ENCODE measurements at regions of chr3 and their contacts with region 1.

Region 1: GRCh38 chr3:71305231-71306206 is 278.0 kb downstream of the FOXP1 start:
- DNase-seq: peak; percentile 57
- ATAC-seq: peak; percentile 71
- H3K4me3 ChIP-seq: peak overlapping the region; percentile 28
- H3K27ac ChIP-seq: peak overlapping the region; percentile 77
- H3K4me1 ChIP-seq: peaks cover 14% of the 10 kb centered on the region
- H3K27me3 ChIP-seq: no peaks in the 10 kb centered on the region
- CTCF ChIP-seq: no peak
- POLR2A ChIP-seq: no peak
- RAD21 ChIP-seq: no peak

Region 2: GRCh38 chr3:70064194-70064779 is 1241.2 kb before region 1 on chr3:
- CTCF ChIA-PET with region 1: no interaction called
- POLR2A ChIA-PET with region 1: no interaction called
- dilution Hi-C with region 1: no loop called
- in situ Hi-C with region 1: no loop called
- intact Hi-C with region 1: loop called (anchors 10 kb)
- DNase-seq: peak; percentile 38
- ATAC-seq: peak; percentile 77
- H3K4me3 ChIP-seq: no peak overlapping the region
- H3K27ac ChIP-seq: no peak overlapping the region
- H3K4me1 ChIP-seq: no peaks in the 10 kb centered on the region
- H3K27me3 ChIP-seq: peaks cover 29% of the 10 kb centered on the region
- CTCF ChIP-seq: peak; percentile 64
- POLR2A ChIP-seq: no peak
- RAD21 ChIP-seq: peak; percentile 70

Region 3: GRCh38 chr3:70539908-70540307 is 765.6 kb before region 1 on chr3:
- CTCF ChIA-PET with region 1: no interaction called
- POLR2A ChIA-PET with region 1: no interaction called
- dilution Hi-C with region 1: no loop called
- in situ Hi-C with region 1: loop called (anchors 10 kb)
- intact Hi-C with region 1: no loop called
- DNase-seq: no peak
- ATAC-seq: no peak
- H3K4me3 ChIP-seq: no peak overlapping the region
- H3K27ac ChIP-seq: no peak overlapping the region
- H3K4me1 ChIP-seq: no peaks in the 10 kb centered on the region
- H3K27me3 ChIP-seq: peaks cover 34% of the 10 kb centered on the region
- CTCF ChIP-seq: no peak
- POLR2A ChIP-seq: no peak
- RAD21 ChIP-seq: no peak

Region 4: DNA sequence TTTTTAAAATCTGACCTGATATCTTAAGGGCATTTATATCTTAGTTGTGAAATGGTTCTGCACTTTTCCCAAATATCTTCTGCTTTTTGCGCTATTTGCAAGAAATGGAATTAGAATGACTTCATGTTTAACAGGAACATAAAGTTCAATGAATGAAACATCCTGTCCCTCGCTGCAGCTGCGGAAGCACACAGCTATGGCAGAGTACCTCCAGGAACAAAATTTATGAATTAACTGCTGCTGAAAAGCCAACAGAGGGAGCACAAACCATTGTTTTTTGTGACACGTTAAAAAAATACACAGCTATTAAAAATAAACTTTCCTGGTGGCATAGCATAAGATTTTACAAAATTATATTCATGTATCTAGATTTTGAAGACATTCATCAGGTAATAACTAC is 588.7 kb before region 1 on chr3:
- CTCF ChIA-PET with region 1: no interaction called
- POLR2A ChIA-PET with region 1: no interaction called
- dilution Hi-C with region 1: no loop called
- in situ Hi-C with region 1: loop called (anchors 25 kb)
- intact Hi-C with region 1: loop called (anchors 2 kb)
- DNase-seq: peak; percentile 48
- ATAC-seq: peak; percentile 69
- H3K4me3 ChIP-seq: no peak overlapping the region
- H3K27ac ChIP-seq: no peak overlapping the region
- H3K4me1 ChIP-seq: no peaks in the 10 kb centered on the region
- H3K27me3 ChIP-seq: no peaks in the 10 kb centered on the region; the same call in 1 of the 2 replicates
- CTCF ChIP-seq: peak; percentile 52
- POLR2A ChIP-seq: no peak
- RAD21 ChIP-seq: peak; percentile 58

Region 5: GRCh38 chr3:71006810-71007785 is 298.4 kb before region 1 on chr3:
- CTCF ChIA-PET with region 1: no interaction called
- POLR2A ChIA-PET with region 1: no interaction called
- dilution Hi-C with region 1: no loop called
- in situ Hi-C with region 1: no loop called
- intact Hi-C with region 1: loop called (anchors 2 kb)
- DNase-seq: no peak
- ATAC-seq: peak; percentile 43; the same call in 1 of the 2 replicates
- H3K4me3 ChIP-seq: no peak overlapping the region
- H3K27ac ChIP-seq: no peak overlapping the region
- H3K4me1 ChIP-seq: peaks cover 5% of the 10 kb centered on the region
- H3K27me3 ChIP-seq: no peaks in the 10 kb centered on the region
- CTCF ChIP-seq: peak; percentile 30
- POLR2A ChIP-seq: no peak
- RAD21 ChIP-seq: peak; percentile 22; the same call in 1 of the 2 replicates

Region 6: GRCh38 chr3:71111784-71112440 is 193.6 kb before region 1 on chr3:
- CTCF ChIA-PET with region 1: no interaction called
- POLR2A ChIA-PET with region 1: no interaction called
- dilution Hi-C with region 1: no loop called
- in situ Hi-C with region 1: no loop called
- intact Hi-C with region 1: loop called (anchors 2 kb)
- DNase-seq: peak; percentile 97
- ATAC-seq: peak; percentile 49
- H3K4me3 ChIP-seq: no peak overlapping the region
- H3K27ac ChIP-seq: peak overlapping the region; percentile 85; the same call in 1 of the 2 replicates
- H3K4me1 ChIP-seq: peaks cover 14% of the 10 kb centered on the region
- H3K27me3 ChIP-seq: no peaks in the 10 kb centered on the region
- CTCF ChIP-seq: no peak
- POLR2A ChIP-seq: no peak
- RAD21 ChIP-seq: peak; percentile 31

Region 7: GRCh38 chr3:71652781-71653413 is 347.4 kb after region 1 on chr3:
- CTCF ChIA-PET with region 1: no interaction called
- POLR2A ChIA-PET with region 1: no interaction called
- dilution Hi-C with region 1: no loop called
- in situ Hi-C with region 1: loop called (anchors 10 kb)
- intact Hi-C with region 1: loop called (anchors 5 kb)
- DNase-seq: peak; percentile 72
- ATAC-seq: peak; percentile 91
- H3K4me3 ChIP-seq: no peak overlapping the region
- H3K27ac ChIP-seq: no peak overlapping the region
- H3K4me1 ChIP-seq: no peaks in the 10 kb centered on the region
- H3K27me3 ChIP-seq: peaks cover 6% of the 10 kb centered on the region; the same call in 1 of the 2 replicates
- CTCF ChIP-seq: peak; percentile 76
- POLR2A ChIP-seq: no peak
- RAD21 ChIP-seq: peak; percentile 89

Measured in IMR-90 (cell line).